ENCODE measurements at regions of chr14 and their contacts with region 1.

Region 1: DNA sequence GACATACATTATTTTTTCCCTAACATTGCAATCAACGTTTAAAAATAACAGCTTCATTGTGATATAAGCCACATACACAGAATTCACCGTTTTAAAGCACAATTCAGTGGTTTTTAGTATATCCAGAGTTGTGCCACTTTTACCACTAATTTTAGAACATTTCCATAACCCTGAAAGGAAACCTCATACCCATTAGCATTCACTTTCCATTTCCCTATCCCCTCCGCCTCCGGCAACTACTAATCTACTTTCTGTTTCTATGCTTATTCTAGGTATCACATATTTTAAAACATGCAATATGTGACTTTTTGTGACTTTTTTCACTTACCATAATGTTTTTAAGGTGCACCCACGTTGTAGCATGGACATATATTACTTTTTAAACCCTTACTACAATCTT is 55.6 kb upstream of the ISM2 start:
- DNase-seq: no peak
- H3K4me3 ChIP-seq: no peak overlapping the region
- H3K27ac ChIP-seq: peak overlapping the region in 4 of 5 donors; percentile 22 to 53 (median 32)
- H3K4me1 ChIP-seq: peaks cover 6 to 14% of the 10 kb centered on the region in 2 donors
- H3K27me3 ChIP-seq: no peaks in the 10 kb centered on the region
- CTCF ChIP-seq: no peak
- POLR2A ChIP-seq: no peak

Region 2: GRCh38 chr14:77457522-77458290 is 96.5 kb before region 1 on chr14 and contains the starts of genes AHSA1 and VIPAS39:
- intact Hi-C with region 1: loop called (anchors 5 to 10 kb)
- DNase-seq: peak; percentile 94 to 99 (median 98)
- H3K4me3 ChIP-seq: peak within 1 kb of the TSS; percentile 62 to 87 (median 81)
- H3K27ac ChIP-seq: peak within 1 kb of the TSS; percentile 71 to 97 (median 94)
- H3K4me1 ChIP-seq: peaks cover 4 to 22% of the 10 kb centered on the region in 2 donors
- H3K27me3 ChIP-seq: no peaks in the 10 kb centered on the region
- CTCF ChIP-seq: peak in 1 of 6 experiments; percentile 4
- POLR2A ChIP-seq: peak; percentile 54 to 74
- total RNA-seq, gene AHSA1: 93.6 to 240 (median 161) TPM
- total RNA-seq, gene VIPAS39: 13.0 to 36.3 (median 20.6) TPM

Region 3: DNA sequence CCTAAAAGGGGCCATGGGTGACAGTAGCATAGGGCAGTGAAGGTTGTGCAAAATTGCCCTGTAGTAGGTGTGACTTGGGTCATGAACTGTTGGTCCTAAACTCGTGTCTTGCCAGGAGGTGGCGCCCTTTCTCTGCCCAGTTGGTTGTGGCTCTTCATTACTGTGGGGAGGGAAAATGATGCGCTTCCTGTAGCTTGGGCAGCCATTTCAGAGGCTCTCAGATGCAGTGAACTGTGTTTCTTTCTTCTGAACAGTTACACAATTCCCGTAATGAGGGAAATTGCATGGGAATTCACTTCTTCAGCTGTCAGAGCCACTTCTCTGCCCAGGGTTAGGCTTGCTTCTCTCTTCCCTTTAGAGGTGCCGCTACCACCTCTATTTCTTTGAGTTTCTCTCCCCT is 467.9 kb after region 1 on chr14:
- intact Hi-C with region 1: no loop called
- DNase-seq: peak in 6 of 7 donors; percentile 38 to 64 (median 50)
- H3K4me3 ChIP-seq: no peak overlapping the region
- H3K27ac ChIP-seq: no peak overlapping the region
- H3K4me1 ChIP-seq: no peaks in the 10 kb centered on the region
- H3K27me3 ChIP-seq: no peaks in the 10 kb centered on the region
- CTCF ChIP-seq: peak in 5 of 6 experiments; percentile 16 to 45 (median 34)
- POLR2A ChIP-seq: no peak

Measured in adrenal gland (tissue), 19 donors.